HepG2 (cell line): ENCODE measurements at regions of chr2 and their contacts with region 1.

Region 1: DNA sequence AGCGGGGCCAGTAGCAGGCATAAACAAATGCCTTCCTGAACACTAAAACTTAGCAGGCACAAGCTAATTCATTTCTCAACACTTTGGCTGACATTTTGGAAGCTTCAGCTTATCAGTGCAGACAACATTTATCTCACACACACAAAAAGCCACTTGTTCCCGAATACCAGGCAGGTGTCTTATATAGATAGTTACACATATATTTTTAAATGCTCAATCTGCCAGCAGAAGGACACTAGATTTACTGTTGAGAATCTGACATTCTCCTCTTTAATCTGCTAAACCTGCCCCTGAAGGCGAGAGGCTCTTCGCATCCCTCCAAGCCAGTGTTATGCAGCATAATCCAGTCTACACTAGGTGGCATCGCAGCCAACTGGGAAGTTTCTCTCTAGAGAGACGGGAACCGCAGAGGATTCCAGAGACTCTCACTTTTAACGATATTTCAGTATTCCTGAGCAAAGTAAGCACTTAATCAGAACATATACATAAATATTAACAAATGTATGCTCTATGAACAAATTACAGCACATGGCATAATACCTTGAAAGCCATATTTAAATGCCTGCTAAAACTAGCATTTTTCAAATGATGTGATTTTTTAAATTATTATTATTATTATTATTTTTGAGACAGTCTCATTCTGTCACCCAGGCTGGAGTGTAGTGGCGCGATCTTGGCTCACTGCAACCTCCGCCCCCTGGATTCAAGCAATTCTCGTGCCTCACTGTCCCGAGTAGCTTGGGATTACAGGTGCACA is 90.2 kb upstream of the SCG2 start:
- DNase-seq: peak; percentile 54
- ATAC-seq: peak; percentile 95
- H3K4me3 ChIP-seq: no peak overlapping the region
- H3K27ac ChIP-seq: no peak overlapping the region
- H3K4me1 ChIP-seq: peaks cover 16% of the 10 kb centered on the region; the same call in 1 of the 2 replicates
- H3K27me3 ChIP-seq: peaks cover 0 to 6% of the 10 kb centered on the region in 2 experiments; a peak in 2 of 5 replicates
- CTCF ChIP-seq: peak; percentile 85
- EP300 ChIP-seq: no peak
- POLR2A ChIP-seq: no peak
- RAD21 ChIP-seq: peak; percentile 61; the same call in 1 of the 2 replicates

Region 2: DNA sequence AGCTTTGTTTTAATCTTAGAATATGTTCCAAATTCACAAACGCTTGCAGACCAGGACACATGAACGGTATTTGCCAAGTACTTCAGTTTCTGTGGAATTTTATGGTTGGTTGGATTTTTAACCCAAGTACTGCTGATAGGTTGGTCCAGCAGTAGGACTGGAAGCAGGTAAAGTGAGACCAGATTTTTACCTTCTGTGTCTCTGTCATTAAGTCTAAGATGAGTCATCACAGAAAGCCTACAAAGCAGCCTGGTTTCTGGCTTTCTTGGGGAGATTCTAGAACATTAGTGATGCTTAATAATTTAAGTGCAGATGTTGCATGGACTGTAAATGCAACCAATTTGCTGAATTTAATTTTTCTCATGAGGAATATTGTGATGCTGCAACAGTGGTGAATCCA is 190.7 kb before region 1 on chr2:
- CTCF ChIA-PET with region 1: no interaction called
- POLR2A ChIA-PET with region 1: no interaction called
- in situ Hi-C with region 1: no loop called
- intact Hi-C with region 1: no loop called
- DNase-seq: no peak
- ATAC-seq: no peak
- H3K4me3 ChIP-seq: no peak overlapping the region
- H3K27ac ChIP-seq: no peak overlapping the region
- H3K4me1 ChIP-seq: no peaks in the 10 kb centered on the region
- H3K27me3 ChIP-seq: no peaks in the 10 kb centered on the region
- CTCF ChIP-seq: no peak
- EP300 ChIP-seq: no peak
- POLR2A ChIP-seq: no peak
- RAD21 ChIP-seq: no peak

Region 3: DNA sequence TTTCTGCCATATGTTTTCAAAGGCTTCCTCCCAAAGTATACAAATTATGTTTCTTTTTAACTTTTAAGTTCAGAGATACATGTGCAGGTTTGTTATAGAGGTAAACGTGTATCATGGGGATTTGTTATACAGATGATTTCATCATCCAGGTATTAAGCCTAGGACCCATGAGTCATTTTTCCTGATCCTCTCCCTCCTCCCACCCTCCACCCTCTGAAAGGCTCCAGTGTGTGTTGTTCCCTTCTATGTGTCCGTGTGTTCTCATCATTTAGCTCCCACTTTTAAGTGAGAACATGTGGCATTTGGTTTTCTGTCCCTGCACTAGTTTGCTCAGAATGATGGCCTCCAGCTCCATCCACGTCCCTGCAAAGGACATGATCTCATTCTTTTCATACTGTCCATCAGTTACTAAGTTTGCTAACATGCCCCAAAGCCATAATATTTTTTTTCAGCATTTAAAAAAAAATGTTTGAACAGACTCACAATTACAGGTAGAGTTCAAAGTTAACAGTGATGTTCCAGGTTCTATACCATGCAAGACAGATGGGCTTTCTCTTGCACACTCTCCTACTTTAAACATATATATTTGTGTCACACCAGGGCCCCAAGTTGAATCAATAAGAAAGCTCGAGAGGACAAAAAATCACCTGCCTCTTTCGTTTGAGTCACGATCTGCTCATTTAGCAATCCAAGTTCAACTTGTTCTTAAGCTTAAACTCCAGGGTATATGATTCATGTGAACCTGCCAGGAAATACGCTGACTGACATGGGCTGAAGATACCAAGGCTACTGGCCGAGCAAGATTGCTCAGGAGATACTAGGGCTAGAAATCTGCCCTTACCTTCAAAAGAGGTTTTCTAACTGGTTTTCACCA is 67.4 kb after region 1 on chr2:
- CTCF ChIA-PET with region 1: no interaction called
- POLR2A ChIA-PET with region 1: no interaction called
- in situ Hi-C with region 1: no loop called
- intact Hi-C with region 1: loop called (anchors 2 kb)
- DNase-seq: peak; percentile 81
- ATAC-seq: peak; percentile 67
- H3K4me3 ChIP-seq: peak overlapping the region in 1 of 3 experiments; percentile 1; a peak in 1 of 6 replicates
- H3K27ac ChIP-seq: peak overlapping the region; percentile 22
- H3K4me1 ChIP-seq: peaks cover 41% of the 10 kb centered on the region
- H3K27me3 ChIP-seq: no peaks in the 10 kb centered on the region
- CTCF ChIP-seq: no peak
- EP300 ChIP-seq: no peak
- POLR2A ChIP-seq: no peak
- RAD21 ChIP-seq: no peak